CD4-positive, alpha-beta T cell (primary cell): ENCODE measurements at regions of chr9 and their contacts with region 1.

Region 1: GRCh38 chr9:3906432-3907213 is 380.8 kb upstream of the RFX3 start:
- DNase-seq: no peak
- ATAC-seq: no peak
- H3K4me3 ChIP-seq: no peak overlapping the region
- H3K4me3 Mint-ChIP-seq: no peak overlapping the region
- H3K27ac ChIP-seq: no peak overlapping the region
- H3K27ac Mint-ChIP-seq: no peak overlapping the region
- H3K4me1 ChIP-seq: no peaks in the 10 kb centered on the region
- H3K4me1 Mint-ChIP-seq: no peaks in the 10 kb centered on the region
- H3K27me3 ChIP-seq: no peaks in the 10 kb centered on the region
- H3K27me3 Mint-ChIP-seq: no peaks in the 10 kb centered on the region
- CTCF ChIP-seq: no peak

Region 2: DNA sequence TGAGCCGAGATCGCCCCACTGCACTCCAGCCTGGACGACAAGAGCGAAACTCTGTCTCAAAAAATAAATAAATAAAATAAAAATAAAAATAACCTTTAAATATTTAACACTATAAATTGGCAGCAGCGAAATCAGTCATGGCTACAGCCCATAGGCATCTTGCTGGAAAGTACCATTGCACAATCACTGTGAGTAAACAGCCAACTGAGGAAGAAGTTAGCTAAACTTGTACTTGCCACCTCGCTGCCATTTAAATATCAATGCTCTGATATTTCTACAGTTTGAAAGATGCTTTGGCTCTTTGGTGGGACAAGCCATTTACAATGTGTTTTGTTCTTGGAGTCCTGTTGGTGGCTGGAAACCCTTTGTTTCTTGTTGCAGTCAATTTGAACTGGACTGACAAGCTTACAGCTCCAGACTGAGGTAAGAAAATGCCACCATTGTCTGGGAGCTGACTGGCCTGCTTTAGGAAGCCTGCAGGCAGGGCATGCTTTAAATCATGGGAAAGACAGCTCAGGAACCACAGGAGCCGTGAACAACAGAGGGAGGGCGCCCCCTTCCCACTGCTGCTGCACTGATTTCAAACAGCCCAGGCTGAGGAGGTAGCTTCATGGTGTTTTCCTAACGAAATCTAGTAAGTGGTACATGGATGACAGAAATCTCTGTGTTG is 58.0 kb before region 1 on chr9:
- CTCF ChIA-PET with region 1: no interaction called
- POLR2A ChIA-PET with region 1: no interaction called
- intact Hi-C with region 1: loop called (anchors 10 kb)
- DNase-seq: no peak
- ATAC-seq: no peak
- H3K4me3 ChIP-seq: no peak overlapping the region
- H3K4me3 Mint-ChIP-seq: no peak overlapping the region
- H3K27ac ChIP-seq: no peak overlapping the region
- H3K27ac Mint-ChIP-seq: no peak overlapping the region
- H3K4me1 ChIP-seq: no peaks in the 10 kb centered on the region
- H3K4me1 Mint-ChIP-seq: no peaks in the 10 kb centered on the region
- H3K27me3 ChIP-seq: peaks cover 0 to 2% of the 10 kb centered on the region in 2 experiments
- H3K27me3 Mint-ChIP-seq: no peaks in the 10 kb centered on the region
- CTCF ChIP-seq: no peak

Region 3: DNA sequence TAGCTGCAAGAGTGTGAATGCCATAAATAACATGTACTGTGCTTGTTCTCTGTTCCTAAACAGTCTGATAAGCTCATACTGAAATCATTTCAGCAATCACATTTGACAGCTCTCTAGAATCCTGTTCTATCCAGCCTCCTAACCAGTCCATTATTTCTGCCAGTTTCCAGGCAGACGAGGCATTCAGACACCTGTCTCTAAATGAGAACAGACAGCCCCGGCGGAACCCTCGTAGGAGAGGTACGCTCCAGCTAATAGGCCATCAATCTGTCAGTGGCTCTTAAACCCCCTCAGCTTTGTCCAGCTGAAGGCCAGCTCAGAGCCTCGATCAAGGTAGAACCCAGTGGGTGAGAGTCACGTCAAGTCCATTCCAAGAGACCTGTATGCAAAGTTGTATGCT is 121.0 kb after region 1 on chr9:
- CTCF ChIA-PET with region 1: no interaction called
- POLR2A ChIA-PET with region 1: no interaction called
- intact Hi-C with region 1: no loop called
- DNase-seq: no peak
- ATAC-seq: no peak
- H3K4me3 ChIP-seq: no peak overlapping the region
- H3K4me3 Mint-ChIP-seq: no peak overlapping the region
- H3K27ac ChIP-seq: no peak overlapping the region
- H3K27ac Mint-ChIP-seq: no peak overlapping the region
- H3K4me1 ChIP-seq: no peaks in the 10 kb centered on the region
- H3K4me1 Mint-ChIP-seq: no peaks in the 10 kb centered on the region
- H3K27me3 ChIP-seq: no peaks in the 10 kb centered on the region
- H3K27me3 Mint-ChIP-seq: peaks cover 9% of the 10 kb centered on the region
- CTCF ChIP-seq: no peak